ENCODE measurements at regions of chr6 and their contacts with region 1.

Region 1: GRCh38 chr6:161393839-161394364 is 120.0 kb upstream of the AGPAT4 start:
- DNase-seq: peak; percentile 88
- H3K4me3 Mint-ChIP-seq: no peak overlapping the region
- H3K27ac Mint-ChIP-seq: no peak overlapping the region
- H3K4me1 Mint-ChIP-seq: no peaks in the 10 kb centered on the region
- H3K27me3 Mint-ChIP-seq: peaks cover 15% of the 10 kb centered on the region

Region 2: DNA sequence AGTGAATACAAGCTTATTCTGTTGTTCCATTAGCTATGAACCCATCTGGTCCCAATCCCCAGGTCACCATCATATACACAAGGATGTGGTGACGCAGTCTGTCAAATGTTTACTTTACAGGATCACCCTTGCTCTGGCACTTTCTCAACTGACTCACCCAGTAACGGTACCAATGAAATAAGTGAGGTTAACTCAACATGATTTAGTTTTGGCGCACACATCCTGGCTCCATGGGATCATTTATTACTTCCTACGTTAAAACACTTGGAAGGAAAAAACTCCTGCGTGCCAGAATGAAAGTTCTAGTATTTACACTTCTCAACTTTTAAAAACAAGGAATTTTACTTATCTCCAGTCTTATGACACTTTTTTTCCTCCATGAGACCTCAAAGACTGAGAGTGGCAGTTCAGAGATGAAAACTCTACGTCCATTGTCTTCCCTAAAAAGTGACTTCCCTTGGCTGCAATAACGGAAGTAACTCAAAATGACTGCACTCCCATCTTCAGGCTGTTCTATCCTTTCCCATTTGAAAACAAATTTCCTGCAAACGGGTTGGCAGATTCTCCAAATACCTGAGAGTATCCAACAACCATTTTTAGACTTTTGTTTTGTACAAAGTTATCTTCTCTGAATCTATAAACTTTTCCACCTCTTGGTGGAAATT is 136.0 kb before region 1 on chr6:
- intact Hi-C with region 1: no loop called
- DNase-seq: no peak
- H3K4me3 Mint-ChIP-seq: no peak overlapping the region
- H3K27ac Mint-ChIP-seq: no peak overlapping the region
- H3K4me1 Mint-ChIP-seq: peaks cover 7% of the 10 kb centered on the region
- H3K27me3 Mint-ChIP-seq: no peaks in the 10 kb centered on the region

Region 3: DNA sequence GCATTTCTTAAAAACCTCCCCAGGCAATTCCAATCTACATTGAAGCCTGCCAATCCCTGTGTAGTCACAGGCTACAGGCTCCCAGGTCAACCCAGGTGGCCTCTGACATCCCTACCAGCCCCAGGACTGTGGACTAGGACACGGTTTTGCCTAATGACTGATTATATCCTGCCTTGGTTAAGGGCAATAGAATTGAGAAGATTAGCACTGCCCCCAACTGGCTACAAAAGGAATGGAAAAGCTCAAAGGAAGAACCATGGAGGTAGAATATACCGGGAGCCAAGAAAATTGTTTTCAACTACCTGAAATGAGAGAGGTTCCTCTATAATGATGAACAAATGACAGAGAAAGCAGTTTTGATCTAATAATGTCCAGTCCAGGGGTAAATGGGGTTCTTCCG is 301.1 kb after region 1 on chr6:
- intact Hi-C with region 1: loop called (anchors 2 kb)
- DNase-seq: peak; percentile 60
- H3K4me3 Mint-ChIP-seq: no peak overlapping the region
- H3K27ac Mint-ChIP-seq: no peak overlapping the region
- H3K4me1 Mint-ChIP-seq: no peaks in the 10 kb centered on the region
- H3K27me3 Mint-ChIP-seq: peaks cover 2% of the 10 kb centered on the region

Region 4: DNA sequence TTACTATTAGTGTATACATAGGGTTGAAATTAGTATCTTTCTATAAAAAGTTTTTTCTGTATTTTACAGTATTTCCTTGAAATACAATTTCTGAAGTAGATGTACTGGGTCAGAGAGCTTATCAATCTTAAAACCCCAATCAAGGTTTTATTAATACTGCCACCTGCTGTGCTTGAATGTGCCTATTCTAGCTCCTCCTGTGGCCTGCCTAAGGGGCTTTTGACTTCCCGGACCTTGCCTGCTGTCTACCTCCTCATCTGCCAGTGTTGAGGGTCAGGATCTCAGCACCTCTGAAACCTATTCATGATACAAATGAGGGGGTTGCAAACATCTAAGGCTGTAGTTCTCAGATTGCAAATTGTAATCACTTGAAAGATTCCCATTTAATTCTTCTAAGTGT is 1343.1 kb after region 1 on chr6:
- intact Hi-C with region 1: loop called (anchors 10 kb)
- DNase-seq: no peak
- H3K4me3 Mint-ChIP-seq: no peak overlapping the region
- H3K27ac Mint-ChIP-seq: no peak overlapping the region
- H3K4me1 Mint-ChIP-seq: peaks cover 5% of the 10 kb centered on the region
- H3K27me3 Mint-ChIP-seq: no peaks in the 10 kb centered on the region

Region 5: GRCh38 chr6:163170294-163170883 is 1776.5 kb after region 1 on chr6:
- intact Hi-C with region 1: loop called (anchors 10 kb)
- DNase-seq: peak; percentile 72
- H3K4me3 Mint-ChIP-seq: no peak overlapping the region
- H3K27ac Mint-ChIP-seq: no peak overlapping the region
- H3K4me1 Mint-ChIP-seq: peaks cover 2% of the 10 kb centered on the region
- H3K27me3 Mint-ChIP-seq: no peaks in the 10 kb centered on the region

Measured in activated CD4-positive, alpha-beta T cell treated with anti-CD3 and anti-CD28 coated beads, Interleukin-2, amount 10 ng/mL, durations not matched to agents 24 days and 14 days (primary cell).